ENCODE measurements at regions of chr2 and their contacts with region 1.

Region 1: GRCh38 chr2:27322766-27323595 is at the start of gene MPV17:
- DNase-seq: peak; percentile 91
- ATAC-seq: peak; percentile 89
- H3K4me3 Mint-ChIP-seq: peak within 1 kb of the TSS; percentile 99
- H3K27ac Mint-ChIP-seq: peak within 1 kb of the TSS; percentile 94
- H3K4me1 Mint-ChIP-seq: peaks cover 11% of the 10 kb centered on the region
- H3K27me3 Mint-ChIP-seq: no peaks in the 10 kb centered on the region
- CTCF ChIP-seq: no peak
- total RNA-seq, gene MPV17: 51.5 to 60.4 TPM (median 59.3 TPM) in 3 replicates

Region 2: GRCh38 chr2:27390822-27391679 is 68.1 kb after region 1 on chr2:
- CTCF ChIA-PET with region 1: no interaction called
- POLR2A ChIA-PET with region 1: interaction called, 11 read pairs
- DNase-seq: no peak
- ATAC-seq: no peak
- H3K4me3 Mint-ChIP-seq: no peak overlapping the region
- H3K27ac Mint-ChIP-seq: no peak overlapping the region; the same call in 1 of the 2 replicates
- H3K4me1 Mint-ChIP-seq: no peaks in the 10 kb centered on the region
- H3K27me3 Mint-ChIP-seq: no peaks in the 10 kb centered on the region
- CTCF ChIP-seq: no peak

Region 3: GRCh38 chr2:28025123-28025522 is 702.1 kb after region 1 on chr2:
- CTCF ChIA-PET with region 1: no interaction called
- POLR2A ChIA-PET with region 1: no interaction called
- DNase-seq: no peak
- ATAC-seq: no peak
- H3K4me3 Mint-ChIP-seq: no peak overlapping the region
- H3K27ac Mint-ChIP-seq: no peak overlapping the region
- H3K4me1 Mint-ChIP-seq: peaks cover 19% of the 10 kb centered on the region
- H3K27me3 Mint-ChIP-seq: no peaks in the 10 kb centered on the region
- CTCF ChIP-seq: no peak